ENCODE measurements at regions of chr4 and their contacts with region 1.

Region 1: DNA sequence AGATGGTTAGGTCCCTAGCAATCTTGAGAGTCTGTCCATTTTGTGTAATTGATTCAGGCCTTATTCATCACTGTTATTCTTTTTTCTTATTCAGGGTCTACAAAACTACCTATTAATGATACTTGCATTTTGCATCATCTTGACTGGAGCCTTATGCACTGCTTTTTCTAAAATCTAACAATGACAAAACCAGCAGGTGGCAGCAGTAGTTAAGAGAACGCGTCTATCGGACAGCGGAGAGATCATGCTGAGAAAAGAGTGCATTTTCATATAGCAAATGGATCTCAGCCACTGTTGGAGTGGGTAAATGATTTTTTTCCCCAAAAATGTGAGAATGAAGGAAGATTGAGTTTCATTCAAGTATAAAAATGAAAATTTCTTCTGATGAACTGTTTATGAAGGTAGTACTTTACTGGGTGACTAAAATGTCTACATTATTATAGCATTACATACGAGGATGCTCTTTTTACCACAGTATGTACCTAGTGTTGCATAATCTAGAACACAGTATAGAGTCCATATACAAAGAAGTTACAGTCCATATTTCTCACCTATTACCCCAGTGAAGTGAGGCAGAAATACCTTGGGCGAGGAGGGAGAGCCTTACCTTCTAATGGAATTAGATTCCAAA is 43.2 kb downstream of the TMEM144 start:
- DNase-seq: peak; percentile 53
- ATAC-seq: peak; percentile 88
- H3K4me3 ChIP-seq: no peak overlapping the region
- H3K27ac ChIP-seq: no peak overlapping the region
- H3K4me1 ChIP-seq: peaks cover 7% of the 10 kb centered on the region
- H3K27me3 ChIP-seq: no peaks in the 10 kb centered on the region
- CTCF ChIP-seq: peak; percentile 74
- EP300 ChIP-seq: no peak
- POLR2A ChIP-seq: no peak
- RAD21 ChIP-seq: 0 out of 2 replicates have a peak, but pooled peaks have one; percentile 30

Region 2: DNA sequence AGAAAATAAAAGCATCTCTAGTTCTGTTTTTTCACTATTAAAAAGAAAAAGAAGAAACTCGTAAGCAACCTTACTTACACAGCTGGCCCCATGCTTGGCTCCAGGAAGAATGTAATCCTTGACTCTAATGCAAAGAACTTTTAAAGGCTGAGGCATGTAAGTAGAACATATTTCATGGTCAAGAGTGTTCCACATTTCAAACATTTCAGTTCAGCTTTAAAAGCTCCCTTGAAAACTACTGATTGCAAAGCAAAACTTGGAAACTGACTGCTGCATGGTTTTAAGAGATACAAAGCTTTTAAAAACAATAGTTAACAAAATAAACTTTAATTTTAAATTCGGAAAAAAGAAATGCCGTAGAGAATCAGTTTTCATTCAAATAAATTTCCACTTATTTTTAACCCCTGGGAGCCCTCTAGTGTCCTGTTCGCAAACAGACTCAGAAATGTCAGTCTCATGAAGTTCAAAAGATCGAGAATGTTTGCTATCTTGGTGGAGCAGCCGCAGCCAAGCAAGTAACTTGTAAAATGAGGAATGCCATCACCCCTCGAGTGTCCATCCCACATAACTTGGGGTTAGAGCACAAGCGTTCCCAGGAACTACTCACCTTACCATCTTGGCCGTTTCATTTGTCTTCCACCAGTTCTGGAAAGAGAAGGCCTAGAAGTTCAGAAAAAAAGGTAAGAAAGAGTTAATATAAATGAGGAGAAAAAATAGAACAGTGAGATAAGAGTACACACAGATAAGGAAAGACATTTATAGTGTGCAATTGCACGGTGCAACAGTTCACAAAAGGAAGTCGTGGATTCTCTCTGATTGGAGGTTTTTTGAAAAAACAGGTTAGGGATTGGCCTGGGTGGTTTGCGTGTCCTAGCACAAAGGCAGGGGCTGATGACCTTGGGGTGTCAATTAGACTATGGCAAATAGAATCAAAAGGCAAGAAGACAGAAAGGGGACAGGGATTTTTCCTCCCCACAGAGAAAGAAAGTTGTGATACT is 80.9 kb before region 1 on chr4 and contains the start of gene GASK1B:
- CTCF ChIA-PET with region 1: no interaction called
- POLR2A ChIA-PET with region 1: no interaction called
- in situ Hi-C with region 1: no loop called
- intact Hi-C with region 1: loop called (anchors 1 kb)
- DNase-seq: peak; percentile 81
- ATAC-seq: peak; percentile 58
- H3K4me3 ChIP-seq: peak within 1 kb of the TSS; percentile 73 to 87 (median 78)
- H3K27ac ChIP-seq: peak within 1 kb of the TSS; percentile 79
- H3K4me1 ChIP-seq: peaks cover 75% of the 10 kb centered on the region
- H3K27me3 ChIP-seq: no peaks in the 10 kb centered on the region
- CTCF ChIP-seq: peak; percentile 65
- EP300 ChIP-seq: peak in 1 of 2 experiments; percentile 38; a peak in 1 of 4 replicates
- POLR2A ChIP-seq: no peak
- RAD21 ChIP-seq: peak; percentile 34; the same call in 1 of the 2 replicates
- total RNA-seq, gene GASK1B: 40.4 and 50.0 TPM in 2 replicates

Region 3: DNA sequence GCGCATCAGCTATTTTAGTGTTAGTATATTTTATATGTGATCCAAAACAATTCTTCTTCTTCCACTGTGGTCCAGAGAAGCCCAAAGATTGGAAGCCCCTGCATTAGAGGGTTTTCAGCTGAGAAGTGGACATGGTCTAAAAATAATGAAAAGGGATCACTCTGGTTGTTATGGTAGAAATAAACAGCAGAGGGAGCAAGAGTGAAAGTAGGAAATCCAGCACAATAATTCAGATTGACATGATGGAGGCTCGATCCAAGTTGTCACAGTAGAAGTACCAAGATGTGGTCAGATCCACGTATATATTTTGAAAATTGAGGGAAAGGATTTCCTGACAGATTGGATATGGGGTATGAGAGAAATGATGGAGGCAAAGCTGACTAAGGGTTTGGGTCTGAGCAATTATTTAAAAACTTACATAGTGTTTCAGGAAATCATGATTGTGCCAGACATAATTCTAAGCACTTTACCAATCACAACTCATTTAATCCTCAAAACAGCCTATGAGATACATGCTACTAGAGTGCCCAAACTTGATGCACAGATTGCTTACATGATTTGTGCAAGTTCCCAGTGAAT is 60.2 kb before region 1 on chr4:
- CTCF ChIA-PET with region 1: interaction called, 10 read pairs
- POLR2A ChIA-PET with region 1: no interaction called
- in situ Hi-C with region 1: loop called (anchors 5 kb)
- intact Hi-C with region 1: loop called (anchors 1 kb)
- DNase-seq: peak; percentile 43
- ATAC-seq: peak; percentile 67
- H3K4me3 ChIP-seq: no peak overlapping the region
- H3K27ac ChIP-seq: no peak overlapping the region
- H3K4me1 ChIP-seq: no peaks in the 10 kb centered on the region
- H3K27me3 ChIP-seq: no peaks in the 10 kb centered on the region
- CTCF ChIP-seq: peak; percentile 65
- EP300 ChIP-seq: no peak
- POLR2A ChIP-seq: no peak
- RAD21 ChIP-seq: peak; percentile 27; the same call in 1 of the 2 replicates

Region 4: DNA sequence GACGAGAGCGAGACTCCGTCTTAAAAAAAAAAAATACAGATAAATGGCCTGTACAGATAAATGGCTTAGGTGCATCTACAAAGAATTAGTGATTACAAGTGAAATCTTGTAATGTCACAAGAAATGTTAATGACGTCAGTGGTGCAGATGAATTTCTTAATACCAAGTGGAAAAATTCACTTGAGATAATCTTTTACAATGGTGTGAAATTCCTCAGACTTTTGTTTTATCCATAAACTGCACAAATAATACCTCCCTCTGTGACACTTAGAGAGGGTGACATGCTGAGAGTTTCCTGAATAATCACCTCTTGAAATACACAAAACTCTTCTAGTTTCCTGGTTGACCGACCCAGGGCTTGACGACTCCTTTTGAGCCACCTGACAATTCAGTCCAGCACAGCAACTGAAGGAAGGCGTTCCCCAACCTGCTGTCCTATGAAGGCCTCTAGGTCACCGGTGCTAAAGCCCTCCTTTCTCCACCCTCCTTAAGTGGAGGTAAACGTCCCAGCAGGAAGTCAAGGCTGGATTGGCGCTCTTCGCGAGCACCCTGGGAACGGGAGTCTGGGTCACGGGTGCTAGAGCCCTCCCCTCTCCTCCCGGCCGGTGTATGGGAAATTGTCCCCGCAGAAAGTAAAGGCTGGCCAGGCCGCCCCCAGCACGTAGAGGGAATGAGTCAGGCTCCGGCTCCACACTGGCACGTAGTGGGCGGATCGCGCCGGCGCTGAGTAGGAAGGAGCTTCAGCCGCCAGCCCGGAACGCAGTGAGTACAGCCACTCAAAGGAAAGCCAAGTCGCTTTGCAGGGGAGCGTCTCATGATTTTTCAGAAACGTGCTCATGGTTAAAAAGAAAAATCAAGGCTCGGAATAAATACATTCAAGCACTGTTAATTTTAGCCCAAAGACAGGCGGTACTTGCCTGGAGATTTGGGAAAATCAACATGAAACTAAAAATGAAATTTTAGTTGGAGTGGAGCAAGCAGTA is 43.3 kb before region 1 on chr4 and contains the start of gene TMEM144:
- CTCF ChIA-PET with region 1: no interaction called
- POLR2A ChIA-PET with region 1: no interaction called
- in situ Hi-C with region 1: no loop called
- intact Hi-C with region 1: loop called (anchors 5 kb)
- DNase-seq: peak; percentile 79
- ATAC-seq: peak; percentile 100
- H3K4me3 ChIP-seq: peak within 1 kb of the TSS; percentile 60 to 71 (median 61)
- H3K27ac ChIP-seq: peak within 1 kb of the TSS; percentile 67
- H3K4me1 ChIP-seq: peaks cover 18% of the 10 kb centered on the region
- H3K27me3 ChIP-seq: no peaks in the 10 kb centered on the region
- CTCF ChIP-seq: peak; percentile 58
- EP300 ChIP-seq: 0 out of 4 replicates have a peak, but pooled peaks of 1 of the 2 experiments have one; percentile 23
- POLR2A ChIP-seq: peak; percentile 63 to 64
- RAD21 ChIP-seq: peak; percentile 38; the same call in 1 of the 2 replicates
- total RNA-seq, gene TMEM144: 10.5 and 12.3 TPM in 2 replicates

Measured in HepG2 (cell line).